ENCODE measurements at regions of chr5 and their contacts with region 1.

Region 1: GRCh38 chr5:3075309-3075708 is 323.8 kb upstream of the IRX2 start:
- DNase-seq: no peak
- H3K4me3 ChIP-seq: no peak overlapping the region
- CTCF ChIP-seq: no peak
- POLR2A ChIP-seq: no peak

Region 2: DNA sequence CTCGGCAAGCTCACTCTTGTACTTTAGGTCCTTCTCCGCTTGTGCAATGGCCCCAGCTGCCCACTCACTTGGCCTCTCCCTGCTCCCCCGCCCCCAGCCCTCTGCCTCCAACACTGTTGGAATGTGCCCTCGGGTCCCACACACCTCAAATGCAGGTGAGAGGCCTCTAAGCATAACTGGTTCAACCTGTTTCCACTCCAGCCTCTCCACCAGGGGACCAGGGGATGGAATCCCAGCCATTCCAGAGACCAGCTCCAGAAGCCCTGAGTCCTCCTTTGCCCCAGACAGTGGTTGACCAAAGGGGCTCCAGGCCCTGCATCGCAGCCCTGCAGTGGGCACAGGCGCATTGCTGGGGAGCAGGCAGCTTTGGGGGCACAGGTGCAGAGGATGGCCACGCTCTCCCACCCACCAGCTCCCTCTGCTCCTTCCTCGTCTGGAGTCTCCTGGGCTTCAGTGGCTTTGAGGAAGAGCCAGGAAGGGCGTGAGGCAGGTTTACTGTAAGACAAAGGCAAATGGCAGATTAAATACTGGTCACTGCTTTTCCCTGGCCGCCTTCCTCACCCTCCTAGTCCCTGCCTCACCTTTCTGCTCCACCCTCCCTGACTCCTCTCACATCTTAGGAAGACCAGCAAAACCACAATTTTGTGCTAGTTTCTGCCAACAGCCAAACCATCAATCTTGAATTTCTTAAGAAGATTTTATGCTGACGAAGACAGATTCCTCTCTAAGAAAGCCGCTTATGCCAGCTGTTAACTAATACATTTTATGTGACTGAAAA is 294.7 kb before region 1 on chr5:
- intact Hi-C with region 1: loop called (anchors 5 kb)
- DNase-seq: no peak
- H3K4me3 ChIP-seq: no peak overlapping the region
- CTCF ChIP-seq: no peak
- POLR2A ChIP-seq: no peak